Naive thymus-derived CD8-positive, alpha-beta T cell (primary cell): ENCODE measurements at regions of chr9 and their contacts with region 1.

Region 1: DNA sequence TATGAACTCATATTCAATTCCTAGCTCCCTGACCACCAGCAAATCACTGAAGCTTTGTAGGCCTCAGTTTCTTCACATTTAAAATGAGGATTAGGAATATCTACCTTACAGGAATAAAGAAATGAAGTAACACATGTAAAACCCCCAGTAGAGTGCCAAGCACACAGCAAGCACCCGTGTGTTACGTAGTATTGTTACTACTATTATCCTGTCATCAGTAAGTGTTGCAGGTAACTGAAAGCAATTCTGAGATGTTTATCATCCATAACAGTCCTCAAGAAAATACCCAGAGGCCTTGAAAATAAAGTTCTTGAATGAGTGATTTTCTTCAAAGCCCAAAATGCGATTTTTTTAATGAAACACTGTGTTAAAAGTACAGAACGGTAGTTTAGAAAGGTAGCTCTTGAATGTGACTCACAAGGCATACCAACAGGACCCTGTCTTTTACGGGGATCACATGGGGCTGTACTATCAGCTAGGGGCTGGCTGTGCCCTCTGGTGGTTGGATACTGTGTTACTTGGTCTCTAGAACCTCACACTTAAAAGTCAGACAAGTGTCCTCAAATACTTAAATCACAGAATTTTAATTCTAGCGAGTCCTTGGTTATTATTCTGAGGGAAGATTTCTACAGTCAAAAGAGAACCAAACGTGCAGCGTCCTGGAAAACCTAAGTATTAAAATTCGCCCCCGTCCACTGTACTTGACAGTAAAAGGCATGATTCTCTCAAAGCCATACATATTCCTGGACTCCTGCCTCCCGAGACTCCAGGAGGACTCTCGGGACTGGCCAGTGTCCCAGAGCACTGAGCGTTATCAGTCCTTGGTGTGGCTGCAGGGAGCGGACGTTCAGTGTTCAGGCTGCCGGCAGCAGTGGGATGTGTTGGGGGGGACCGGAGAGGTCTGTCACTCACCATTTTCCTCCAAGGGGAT is 725 bp downstream of the NDUFB6 start:
- DNase-seq: peak; percentile 39 to 90 (median 72)
- ATAC-seq: peak; percentile 83 to 84
- H3K4me3 Mint-ChIP-seq: peak overlapping the region; percentile 97 to 100 (median 99)
- H3K27ac Mint-ChIP-seq: peak overlapping the region; percentile 90 to 99 (median 98)
- H3K4me1 Mint-ChIP-seq: peaks cover 17 to 42% (median 33%) of the 10 kb centered on the region in 4 donors
- H3K27me3 Mint-ChIP-seq: peaks cover 0 to 2% (median 0%) of the 10 kb centered on the region in 5 donors

Region 2: GRCh38 chr9:32378993-32379729 is 193.1 kb before region 1 on chr9:
- POLR2A ChIA-PET with region 1: interaction called, 11 read pairs
- DNase-seq: peak in 9 of 10 donors; percentile 19 to 78 (median 59)
- ATAC-seq: peak; percentile 86 to 87
- H3K4me3 Mint-ChIP-seq: peak overlapping the region in 4 of 10 donors; percentile 6 to 36 (median 18)
- H3K27ac Mint-ChIP-seq: peak overlapping the region in 3 of 10 donors; percentile 2 to 22 (median 8)
- H3K4me1 Mint-ChIP-seq: peaks cover 6 to 19% (median 15%) of the 10 kb centered on the region in 4 donors
- H3K27me3 Mint-ChIP-seq: peaks cover 2 to 17% (median 8%) of the 10 kb centered on the region in 5 donors

Region 3: DNA sequence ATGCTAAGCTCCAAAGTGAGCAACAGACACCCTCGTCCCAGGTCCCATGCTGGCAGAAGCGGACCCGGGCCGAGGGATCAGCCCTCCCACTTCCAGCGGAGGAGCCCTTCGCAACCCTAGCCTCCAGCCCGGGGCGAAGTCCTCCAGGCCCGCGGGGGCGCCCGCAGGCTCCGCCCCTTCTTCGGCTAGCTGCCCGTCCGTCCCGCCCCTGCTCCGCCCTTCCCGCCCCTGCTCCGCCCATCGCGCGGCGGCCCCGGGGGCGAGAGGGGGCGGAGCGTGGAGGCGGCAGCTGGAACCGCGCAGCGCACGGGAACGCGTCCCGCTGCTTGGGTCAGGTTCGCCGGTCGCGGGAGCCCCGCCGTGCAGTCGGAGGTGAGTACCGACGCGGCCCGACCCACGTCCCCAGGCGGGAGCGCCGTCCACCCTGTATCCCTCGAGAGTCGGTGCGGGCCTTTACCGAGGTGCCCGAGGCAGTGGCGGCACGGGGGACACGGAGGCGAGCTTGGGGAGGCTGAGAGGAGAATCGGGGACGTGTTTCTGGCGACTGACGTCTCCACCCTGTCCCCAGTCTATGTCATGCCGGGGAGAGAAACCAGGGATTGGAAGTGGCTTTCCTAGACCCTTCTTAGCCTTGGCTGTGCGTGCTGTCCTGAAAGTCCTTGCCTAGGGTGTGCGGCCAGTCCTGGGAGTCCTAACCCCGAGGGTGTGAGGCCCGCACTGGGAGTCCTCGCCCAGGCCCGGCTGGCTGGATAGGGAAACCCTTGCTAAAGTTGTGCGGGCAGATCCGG is 187.7 kb before region 1 on chr9 and contains the start of gene ACO1:
- POLR2A ChIA-PET with region 1: interaction called, 11 read pairs
- DNase-seq: peak; percentile 68 to 93 (median 84)
- ATAC-seq: peak; percentile 94
- H3K4me3 Mint-ChIP-seq: peak within 1 kb of the TSS; percentile 75 to 94 (median 88)
- H3K27ac Mint-ChIP-seq: peak within 1 kb of the TSS; percentile 24 to 83 (median 61)
- H3K4me1 Mint-ChIP-seq: peaks cover 5 to 31% (median 24%) of the 10 kb centered on the region in 4 donors
- H3K27me3 Mint-ChIP-seq: peaks cover 0 to 17% (median 5%) of the 10 kb centered on the region in 5 donors
- polyA plus RNA-seq, gene ACO1: 8.3 to 14.5 (median 13.1) TPM

Region 4: DNA sequence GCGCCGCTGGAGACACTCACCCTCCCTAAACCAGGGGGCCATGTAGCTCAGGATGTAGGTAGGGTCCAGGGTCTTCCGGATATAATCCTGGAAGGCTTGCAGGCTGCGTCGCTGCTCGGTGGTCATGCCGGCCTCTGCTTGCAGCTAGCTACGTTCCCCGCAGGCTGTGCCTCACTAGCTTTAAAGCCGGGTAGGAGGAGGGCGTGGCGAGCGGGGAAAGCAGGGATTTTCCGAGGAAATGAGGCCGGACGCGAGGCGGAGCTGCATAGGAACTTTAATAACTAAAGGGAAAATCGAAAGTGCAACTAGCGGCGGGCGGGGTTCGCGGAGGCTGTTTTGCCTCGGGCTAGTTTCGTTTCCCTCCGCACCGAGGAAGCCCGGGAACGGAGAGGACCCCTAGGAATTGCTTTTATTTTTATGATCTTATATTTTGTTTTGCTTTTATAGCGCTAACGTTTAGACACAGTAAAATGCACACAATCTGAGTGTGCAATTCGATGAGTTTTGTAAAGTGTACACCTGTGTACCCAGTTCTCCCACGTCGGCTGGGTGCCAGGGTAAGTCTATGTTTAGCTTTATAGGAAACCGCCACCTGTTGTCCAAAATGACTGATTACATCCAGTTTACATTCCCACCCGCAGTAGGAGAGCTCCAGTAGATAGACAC is 46.1 kb before region 1 on chr9 and contains the start of gene RIGI:
- POLR2A ChIA-PET with region 1: interaction called, 10 read pairs
- DNase-seq: peak; percentile 60 to 85 (median 78)
- ATAC-seq: peak; percentile 80 to 83
- H3K4me3 Mint-ChIP-seq: peak within 1 kb of the TSS; percentile 83 to 99 (median 96)
- H3K27ac Mint-ChIP-seq: peak within 1 kb of the TSS; percentile 94 to 99 (median 97)
- H3K4me1 Mint-ChIP-seq: peaks cover 15 to 56% (median 46%) of the 10 kb centered on the region in 4 donors
- H3K27me3 Mint-ChIP-seq: no peaks in the 10 kb centered on the region
- polyA plus RNA-seq, gene RIGI: 12.7 to 14.4 (median 14.1) TPM

Region 5: DNA sequence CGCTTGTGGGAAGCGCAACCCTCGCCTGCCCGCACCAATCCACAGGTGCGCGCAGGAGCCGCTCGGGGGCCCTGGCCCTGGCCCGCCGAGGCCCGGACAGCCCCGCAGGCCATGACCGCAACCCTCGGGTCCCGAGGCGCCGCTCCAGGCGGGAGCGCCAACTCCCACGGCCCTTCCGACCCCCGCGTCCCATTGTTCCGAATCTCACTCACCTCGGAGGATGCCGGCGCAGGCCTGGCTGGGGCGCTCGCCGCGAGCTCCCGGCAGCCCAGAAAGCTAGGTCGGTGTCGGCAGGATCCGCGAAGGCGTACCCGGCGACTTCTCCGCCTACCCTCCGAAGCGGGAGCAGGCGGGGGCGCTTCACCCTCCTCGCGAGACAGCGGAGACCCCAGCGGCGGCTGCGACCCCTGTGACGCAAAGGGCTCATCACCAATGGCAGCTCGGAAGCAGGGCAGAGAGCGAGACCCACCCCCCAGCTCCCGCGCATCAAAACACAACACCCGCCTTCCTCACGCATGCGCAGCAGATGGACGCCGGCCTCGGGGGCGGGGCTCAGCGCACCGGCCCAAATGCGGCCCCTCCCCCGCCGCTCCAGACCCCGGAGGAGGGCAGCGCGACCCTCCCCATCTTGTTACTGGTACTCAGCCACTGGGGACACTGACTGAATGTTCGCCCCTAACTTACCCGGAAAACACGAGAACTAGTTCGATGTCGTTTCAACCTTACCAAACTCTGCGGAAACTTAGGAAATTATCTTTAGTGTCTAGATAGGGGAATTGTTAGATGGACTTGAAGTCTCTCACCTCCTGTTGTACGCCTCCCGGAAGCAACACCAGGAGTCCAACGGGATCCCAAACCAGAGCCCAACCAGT is 21.4 kb before region 1 on chr9:
- POLR2A ChIA-PET with region 1: interaction called, 50 read pairs
- DNase-seq: peak; percentile 93 to 99 (median 98)
- ATAC-seq: peak; percentile 82 to 86
- H3K4me3 Mint-ChIP-seq: peak overlapping the region; percentile 92 to 100 (median 98)
- H3K27ac Mint-ChIP-seq: peak overlapping the region; percentile 95 to 100 (median 99)
- H3K4me1 Mint-ChIP-seq: peaks cover 20 to 68% (median 61%) of the 10 kb centered on the region in 4 donors
- H3K27me3 Mint-ChIP-seq: no peaks in the 10 kb centered on the region

Region 6: GRCh38 chr9:32603914-32604741 is 31.9 kb after region 1 on chr9:
- POLR2A ChIA-PET with region 1: no interaction called
- DNase-seq: no peak
- ATAC-seq: no peak
- H3K4me3 Mint-ChIP-seq: no peak overlapping the region
- H3K27ac Mint-ChIP-seq: peak overlapping the region in 1 of 10 donors; percentile 66
- H3K4me1 Mint-ChIP-seq: peaks cover 0 to 1% (median 0%) of the 10 kb centered on the region in 4 donors
- H3K27me3 Mint-ChIP-seq: peaks cover 3 to 29% (median 10%) of the 10 kb centered on the region in 5 donors

Region 7: DNA sequence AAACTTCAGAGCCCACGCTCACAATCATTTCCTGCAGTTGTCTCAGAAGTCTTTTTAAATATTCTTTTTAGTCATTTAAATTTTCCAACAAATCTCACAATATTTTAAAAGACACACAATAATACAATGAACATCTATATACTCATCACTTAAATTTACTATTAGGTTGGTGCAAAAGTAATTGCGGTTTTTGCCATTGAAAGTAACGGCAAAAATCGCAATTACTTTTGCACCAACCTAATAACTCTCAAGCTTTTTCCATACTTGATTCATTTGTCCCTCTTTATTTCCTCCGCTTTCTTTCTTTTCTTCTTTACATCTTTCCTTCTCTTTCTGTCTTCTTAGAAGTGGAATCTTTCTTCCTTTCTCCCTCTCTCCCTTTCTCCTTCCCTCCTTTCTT is 191.9 kb after region 1 on chr9:
- POLR2A ChIA-PET with region 1: no interaction called
- DNase-seq: no peak
- ATAC-seq: no peak
- H3K4me3 Mint-ChIP-seq: no peak overlapping the region
- H3K27ac Mint-ChIP-seq: no peak overlapping the region
- H3K4me1 Mint-ChIP-seq: no peaks in the 10 kb centered on the region
- H3K27me3 Mint-ChIP-seq: peaks cover 7 to 14% (median 7%) of the 10 kb centered on the region in 5 donors